K562 (cell line): ENCODE measurements at regions of chr22 and their contacts with region 1.

Region 1: GRCh38 chr22:29205594-29206371 is at the start of gene EMID1:
- DNase-seq: peak; percentile 54 to 90 (median 81)
- ATAC-seq: peak; percentile 72
- H3K4me3 ChIP-seq: peak within 1 kb of the TSS; percentile 76
- H3K27ac ChIP-seq: peak within 1 kb of the TSS; percentile 60
- H3K4me1 ChIP-seq: peaks cover 45 to 58% of the 10 kb centered on the region in 2 experiments
- H3K27me3 ChIP-seq: no peaks in the 10 kb centered on the region
- CTCF ChIP-seq: peak; percentile 10 to 47 (median 27); a peak in 3 of 6 replicates
- EP300 ChIP-seq: no peak
- POLR2A ChIP-seq: no peak; the same call in 1 of the 2 replicates
- RAD21 ChIP-seq: no peak
- polyA plus RNA-seq, gene EMID1: 0.15 to 0.17 TPM

Region 2: GRCh38 chr22:28582806-28583205 is 623.0 kb before region 1 on chr22:
- CTCF ChIA-PET with region 1: no interaction called
- POLR2A ChIA-PET with region 1: no interaction called
- in situ Hi-C with region 1: no loop called
- intact Hi-C with region 1: no loop called
- DNase-seq: no peak
- ATAC-seq: no peak
- H3K4me3 ChIP-seq: no peak overlapping the region
- H3K27ac ChIP-seq: no peak overlapping the region
- H3K4me1 ChIP-seq: no peaks in the 10 kb centered on the region
- H3K27me3 ChIP-seq: no peaks in the 10 kb centered on the region
- CTCF ChIP-seq: no peak
- EP300 ChIP-seq: no peak
- POLR2A ChIP-seq: no peak
- RAD21 ChIP-seq: no peak

Region 3: GRCh38 chr22:29195118-29195963 is 10.4 kb before region 1 on chr22:
- CTCF ChIA-PET with region 1: no interaction called
- POLR2A ChIA-PET with region 1: interaction called, 13 read pairs
- in situ Hi-C with region 1: no loop called
- intact Hi-C with region 1: no loop called
- DNase-seq: peak; percentile 41 to 85 (median 60)
- ATAC-seq: peak; percentile 80
- H3K4me3 ChIP-seq: no peak overlapping the region
- H3K27ac ChIP-seq: peak overlapping the region; percentile 79
- H3K4me1 ChIP-seq: peaks cover 22 to 23% of the 10 kb centered on the region in 2 experiments
- H3K27me3 ChIP-seq: no peaks in the 10 kb centered on the region
- CTCF ChIP-seq: peak in 2 of 3 experiments; percentile 5 to 26; a peak in 2 of 6 replicates
- EP300 ChIP-seq: peak; percentile 87
- POLR2A ChIP-seq: no peak
- RAD21 ChIP-seq: peak in 1 of 2 experiments; percentile 25; a peak in 1 of 4 replicates